Activated T-helper 2 cell treated with anti-CD3 and anti-CD28 coated beads, Interferon-gamma antibody, Interleukin-2, Interleukin-4, amounts not matched to agents 10 μg/mL and 5 μg/mL and 100 μg/mL, durations not matched to agents 14 hours and 24 hours and 36 hours (primary cell): ENCODE measurements at regions of chr5 and their contacts with region 1.

Region 1: DNA sequence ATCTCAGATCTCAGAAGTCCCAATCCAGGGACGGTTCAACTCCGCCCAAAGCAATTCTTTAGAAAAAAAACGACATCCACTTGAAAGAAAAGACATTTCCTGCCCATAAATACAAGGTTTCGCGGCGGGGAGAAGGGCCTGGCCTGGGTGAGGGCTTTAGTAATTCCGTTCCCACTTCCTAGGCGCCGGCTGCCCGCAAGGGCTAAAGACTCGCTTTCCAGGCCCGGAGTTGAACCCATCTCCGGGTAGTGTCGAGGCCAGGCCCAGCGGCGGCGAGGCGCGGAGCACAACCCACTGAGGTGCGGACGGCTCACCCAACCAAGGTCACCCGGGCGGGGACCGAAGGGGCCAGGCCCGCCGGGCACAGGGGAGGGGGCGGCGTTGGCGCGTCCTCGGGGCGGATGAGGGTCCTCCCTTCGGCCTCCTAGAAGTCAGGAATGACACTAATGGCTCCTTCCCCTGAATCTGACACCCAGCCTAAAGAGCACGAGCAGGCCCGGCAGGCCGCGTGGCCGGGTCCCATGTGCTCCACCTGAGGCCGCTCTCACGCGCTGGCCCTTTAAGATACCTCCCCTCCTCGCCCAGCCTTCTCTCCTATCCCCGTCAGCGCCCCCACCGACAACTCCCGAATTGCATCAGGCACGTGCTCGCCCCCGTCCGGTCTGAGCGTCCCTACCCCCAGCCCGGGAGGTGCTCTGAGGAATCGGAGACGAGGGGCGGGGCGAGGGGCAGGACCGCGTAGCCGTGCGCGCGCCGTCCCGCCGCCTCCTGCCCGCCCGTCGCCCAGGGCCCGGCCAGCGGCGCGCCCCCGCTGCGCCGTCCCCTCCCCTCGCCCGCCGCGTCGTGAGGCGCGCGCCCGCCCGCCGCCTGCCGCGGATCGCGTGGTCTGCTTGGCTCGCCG is 467 bp upstream of the LARP1 start:
- DNase-seq: peak; percentile 99
- H3K4me3 Mint-ChIP-seq: peak overlapping the region; percentile 84
- H3K27ac Mint-ChIP-seq: peak overlapping the region; percentile 97
- H3K4me1 Mint-ChIP-seq: peaks cover 34% of the 10 kb centered on the region
- H3K27me3 Mint-ChIP-seq: no peaks in the 10 kb centered on the region

Region 2: DNA sequence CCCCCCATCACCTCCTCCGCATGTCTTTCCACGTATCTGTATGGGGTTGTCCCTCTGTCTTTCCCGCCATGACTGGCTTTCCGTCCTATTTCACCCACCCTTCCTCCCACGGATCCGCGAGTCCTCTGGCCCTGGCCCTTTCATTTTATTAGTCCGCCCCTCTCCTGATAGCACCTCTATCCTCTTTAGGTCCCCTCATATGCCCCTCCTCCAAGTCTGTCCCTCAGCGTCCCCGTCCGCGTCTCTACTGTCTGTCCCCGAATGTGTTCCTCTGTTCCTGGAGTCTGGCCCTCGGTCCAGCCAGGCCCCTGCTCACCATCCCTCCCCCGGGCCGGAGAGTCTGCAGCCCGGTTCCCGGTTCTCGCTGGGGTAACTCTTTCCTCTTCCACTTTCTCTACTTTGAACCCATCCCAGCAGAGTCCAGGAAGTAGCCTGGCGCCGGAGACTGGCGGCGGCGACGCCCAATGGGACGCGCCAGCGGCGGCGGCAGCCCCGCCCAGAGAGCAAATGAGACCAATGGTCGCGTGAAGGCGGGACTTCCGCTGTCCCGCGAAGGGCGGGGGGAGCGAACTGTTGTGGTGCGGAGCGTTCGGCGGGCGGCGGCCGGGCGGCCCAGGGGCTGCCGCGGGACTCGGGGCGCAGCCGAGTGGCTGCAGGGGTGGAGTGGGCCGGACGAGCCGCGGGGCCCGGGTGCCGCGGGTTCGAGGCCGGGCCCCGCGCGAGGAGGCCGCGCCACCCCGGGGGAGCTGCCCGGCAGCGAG is 309.1 kb before region 1 on chr5 and contains the start of gene SAP30L:
- intact Hi-C with region 1: loop called (anchors 5 kb)
- DNase-seq: peak; percentile 96
- H3K4me3 Mint-ChIP-seq: peak within 1 kb of the TSS; percentile 98
- H3K27ac Mint-ChIP-seq: peak within 1 kb of the TSS; percentile 94
- H3K4me1 Mint-ChIP-seq: peaks cover 31% of the 10 kb centered on the region
- H3K27me3 Mint-ChIP-seq: no peaks in the 10 kb centered on the region
- total RNA-seq, gene SAP30L: 35.9 and 36.0 TPM in 2 replicates

Region 3: GRCh38 chr5:154654486-154655371 is 100.0 kb before region 1 on chr5:
- intact Hi-C with region 1: loop called (anchors 5 kb)
- DNase-seq: no peak
- H3K4me3 Mint-ChIP-seq: no peak overlapping the region
- H3K27ac Mint-ChIP-seq: no peak overlapping the region
- H3K4me1 Mint-ChIP-seq: peaks cover 5% of the 10 kb centered on the region
- H3K27me3 Mint-ChIP-seq: no peaks in the 10 kb centered on the region

Region 4: DNA sequence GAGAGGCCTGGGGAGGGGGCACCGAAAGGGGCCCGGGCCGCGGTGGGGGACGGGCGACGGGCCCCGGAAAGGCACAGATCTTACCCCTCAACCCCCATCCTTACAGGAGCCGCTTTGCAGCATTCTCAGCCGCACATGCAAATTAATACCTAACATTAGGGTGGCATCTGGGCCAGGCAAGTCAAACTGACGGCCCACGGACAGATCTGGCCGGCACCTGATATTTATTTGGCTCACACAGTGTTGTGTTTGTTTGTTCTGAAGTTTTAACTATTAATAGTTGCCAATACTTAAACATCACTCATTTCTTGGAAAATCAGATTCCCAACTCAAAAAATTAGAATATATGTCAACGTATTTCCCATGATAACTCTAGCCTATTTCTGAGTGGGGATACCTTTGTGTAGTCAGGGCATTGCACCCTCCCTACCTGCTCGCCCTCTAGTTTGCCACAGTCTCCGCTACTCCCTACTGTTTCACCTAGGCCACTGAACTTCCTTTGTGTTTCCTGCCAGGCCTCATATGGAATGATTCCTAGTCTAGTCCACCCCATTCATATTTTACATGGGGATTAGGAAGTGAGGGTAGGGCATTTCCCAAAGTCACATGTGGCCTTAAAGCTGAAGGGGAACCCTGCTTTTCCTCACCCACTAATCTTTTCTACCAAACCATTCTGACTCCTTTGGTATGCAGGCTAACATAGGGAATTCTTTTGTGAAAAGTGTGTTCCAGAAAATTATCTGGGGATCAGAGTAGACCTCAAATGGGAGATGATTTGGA is 71.4 kb before region 1 on chr5:
- intact Hi-C with region 1: loop called (anchors 2 kb)
- DNase-seq: no peak
- H3K4me3 Mint-ChIP-seq: peak overlapping the region; percentile 64
- H3K27ac Mint-ChIP-seq: no peak overlapping the region
- H3K4me1 Mint-ChIP-seq: no peaks in the 10 kb centered on the region
- H3K27me3 Mint-ChIP-seq: peaks cover 29% of the 10 kb centered on the region

Region 5: DNA sequence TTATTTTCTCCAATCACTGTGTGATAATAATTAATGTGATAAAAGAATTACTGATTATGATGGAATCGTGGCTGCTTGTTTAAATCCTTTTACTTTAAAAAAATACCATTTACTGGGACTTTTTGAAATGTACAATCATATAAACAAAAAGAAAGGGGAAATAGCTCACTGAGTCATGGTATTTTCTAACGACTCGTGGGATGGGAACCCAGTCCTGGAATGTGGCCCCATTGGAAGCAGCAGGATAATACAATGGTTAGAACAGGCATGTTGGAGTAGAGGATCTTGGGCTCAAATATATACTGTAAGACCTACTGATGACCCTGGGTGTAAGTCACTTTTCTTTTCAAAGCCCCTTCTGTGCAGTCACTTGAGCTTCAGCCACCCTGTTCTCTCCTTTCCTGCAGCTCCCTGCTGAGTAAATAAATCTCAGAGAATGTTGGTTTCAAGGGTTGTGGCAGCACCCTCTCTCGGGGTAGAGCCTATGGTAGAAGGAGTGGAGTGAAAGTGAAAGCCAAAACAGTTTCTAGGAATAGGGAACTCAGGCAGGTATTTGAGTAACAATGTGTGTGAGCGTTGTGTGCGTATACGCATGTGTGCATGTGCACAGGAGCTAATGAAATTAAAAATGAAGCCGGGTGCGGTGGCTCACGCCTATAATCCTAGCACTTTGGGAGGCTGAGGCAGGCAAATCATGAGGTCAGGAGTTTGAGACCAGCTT is 40.3 kb before region 1 on chr5:
- intact Hi-C with region 1: no loop called
- DNase-seq: no peak
- H3K4me3 Mint-ChIP-seq: peak overlapping the region; percentile 2
- H3K27ac Mint-ChIP-seq: no peak overlapping the region
- H3K4me1 Mint-ChIP-seq: peaks cover 5% of the 10 kb centered on the region
- H3K27me3 Mint-ChIP-seq: peaks cover 3% of the 10 kb centered on the region

Region 6: DNA sequence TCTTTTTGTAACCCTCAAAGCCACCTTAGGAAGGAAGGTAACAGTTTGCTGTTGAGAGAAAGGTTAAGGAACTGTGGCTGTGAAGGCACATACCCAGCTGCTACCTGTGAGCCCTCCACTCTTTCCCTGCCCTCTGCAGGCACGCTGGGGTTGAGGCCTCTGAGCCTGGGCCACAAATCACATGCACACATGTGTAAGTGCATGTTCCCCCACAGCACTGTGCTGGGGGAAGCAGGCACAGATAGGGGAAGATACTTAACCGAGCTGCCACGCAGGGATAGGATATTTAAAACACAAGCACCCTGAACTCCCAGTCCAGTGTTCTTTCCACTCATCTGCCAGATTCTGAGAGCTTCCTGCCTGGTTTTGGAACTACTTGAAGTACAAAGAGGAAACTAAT is 18.6 kb after region 1 on chr5:
- intact Hi-C with region 1: loop called (anchors 2 kb)
- DNase-seq: no peak
- H3K4me3 Mint-ChIP-seq: no peak overlapping the region
- H3K27ac Mint-ChIP-seq: peak overlapping the region; percentile 25
- H3K4me1 Mint-ChIP-seq: peaks cover 21% of the 10 kb centered on the region
- H3K27me3 Mint-ChIP-seq: no peaks in the 10 kb centered on the region

Region 7: DNA sequence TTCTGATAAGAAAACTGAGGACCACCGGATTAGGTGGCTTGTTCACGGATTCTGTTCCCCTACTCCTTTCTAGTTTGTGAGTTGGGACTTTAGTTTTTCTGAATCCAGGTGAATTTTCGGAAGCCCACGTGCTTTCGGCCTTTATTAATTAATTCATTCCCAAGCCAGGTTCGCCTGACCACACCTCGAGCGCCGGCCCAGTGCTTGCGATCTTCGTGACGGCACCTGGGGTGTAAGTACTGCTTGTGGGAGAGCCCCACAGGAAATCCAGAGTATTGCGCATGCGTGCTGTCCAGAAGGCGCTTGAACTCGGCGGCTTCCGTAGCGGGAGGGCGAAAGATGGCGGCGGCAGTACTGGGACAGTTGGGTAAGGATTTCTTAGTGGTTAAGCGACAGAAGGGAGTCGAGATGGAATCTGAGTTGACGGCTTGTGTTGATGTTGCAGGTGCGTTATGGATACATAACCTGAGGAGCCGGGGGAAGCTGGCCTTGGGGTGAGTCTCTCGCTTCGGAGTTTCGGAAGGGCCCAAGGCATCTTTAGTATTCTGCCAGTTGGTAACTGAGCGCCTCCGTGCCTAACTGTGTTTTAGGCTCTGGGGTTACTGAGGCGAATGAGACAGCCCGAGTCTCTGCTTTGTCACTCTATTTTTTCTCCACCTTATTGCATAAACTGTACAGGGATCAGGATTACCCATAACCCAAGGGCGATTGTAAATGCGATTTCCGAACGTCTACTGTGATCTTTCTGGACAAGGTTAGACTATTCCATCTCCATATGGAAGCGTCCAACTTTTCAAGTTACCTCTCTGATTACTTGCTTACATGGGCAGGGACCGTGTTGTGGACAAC is 186.3 kb after region 1 on chr5 and contains the start of gene MRPL22:
- intact Hi-C with region 1: loop called (anchors 1 kb)
- DNase-seq: peak; percentile 93
- H3K4me3 Mint-ChIP-seq: peak within 1 kb of the TSS; percentile 98
- H3K27ac Mint-ChIP-seq: peak within 1 kb of the TSS; percentile 95
- H3K4me1 Mint-ChIP-seq: peaks cover 32% of the 10 kb centered on the region
- H3K27me3 Mint-ChIP-seq: no peaks in the 10 kb centered on the region
- total RNA-seq, gene MRPL22: 79.2 and 81.9 TPM in 2 replicates